ENCODE measurements at regions of chr6 and their contacts with region 1.

Region 1: GRCh38 chr6:163413345-163414116 is 987 bp upstream of the QKI start:
- DNase-seq: peak; percentile 84
- H3K4me3 ChIP-seq: peak overlapping the region; percentile 98 to 99
- H3K27ac ChIP-seq: peak overlapping the region; percentile 99
- H3K4me1 ChIP-seq: no peaks in the 10 kb centered on the region
- H3K27me3 ChIP-seq: no peaks in the 10 kb centered on the region
- CTCF ChIP-seq: peak in 2 of 4 experiments; percentile 11 to 15
- POLR2A ChIP-seq: peak; percentile 72

Region 2: GRCh38 chr6:163338671-163339405 is 74.7 kb before region 1 on chr6:
- intact Hi-C with region 1: loop called (anchors 5 kb)
- DNase-seq: no peak
- H3K4me3 ChIP-seq: no peak overlapping the region
- H3K27ac ChIP-seq: no peak overlapping the region
- H3K4me1 ChIP-seq: no peaks in the 10 kb centered on the region
- H3K27me3 ChIP-seq: no peaks in the 10 kb centered on the region
- CTCF ChIP-seq: no peak
- POLR2A ChIP-seq: no peak

Region 3: DNA sequence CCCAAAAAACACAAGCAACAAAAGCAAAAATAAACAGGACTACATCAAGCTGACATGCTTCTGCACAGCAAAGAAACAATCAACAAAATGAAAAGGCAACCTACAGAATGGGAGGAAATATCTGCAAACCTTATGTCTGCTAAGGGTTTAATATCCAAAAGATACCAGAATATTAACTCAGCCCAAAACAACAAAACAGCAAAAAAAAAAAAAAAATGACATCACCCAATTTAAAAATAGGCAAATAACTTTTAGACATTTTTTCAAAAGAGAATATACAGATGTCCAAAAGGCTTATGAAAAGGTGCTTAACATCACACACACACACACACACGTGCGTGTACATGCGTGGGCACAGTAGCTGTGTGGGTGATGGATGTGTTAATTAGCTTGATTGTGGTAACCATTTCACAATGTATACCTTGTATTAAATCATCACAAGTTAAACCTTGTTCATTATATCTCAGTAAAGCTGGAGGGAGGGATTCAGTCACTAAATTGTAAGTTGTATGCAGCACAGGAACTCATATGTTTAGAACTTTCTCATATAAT is 53.4 kb after region 1 on chr6:
- intact Hi-C with region 1: no loop called
- DNase-seq: no peak
- H3K4me3 ChIP-seq: no peak overlapping the region
- H3K27ac ChIP-seq: no peak overlapping the region
- H3K4me1 ChIP-seq: no peaks in the 10 kb centered on the region
- H3K27me3 ChIP-seq: no peaks in the 10 kb centered on the region
- CTCF ChIP-seq: no peak
- POLR2A ChIP-seq: no peak

Region 4: DNA sequence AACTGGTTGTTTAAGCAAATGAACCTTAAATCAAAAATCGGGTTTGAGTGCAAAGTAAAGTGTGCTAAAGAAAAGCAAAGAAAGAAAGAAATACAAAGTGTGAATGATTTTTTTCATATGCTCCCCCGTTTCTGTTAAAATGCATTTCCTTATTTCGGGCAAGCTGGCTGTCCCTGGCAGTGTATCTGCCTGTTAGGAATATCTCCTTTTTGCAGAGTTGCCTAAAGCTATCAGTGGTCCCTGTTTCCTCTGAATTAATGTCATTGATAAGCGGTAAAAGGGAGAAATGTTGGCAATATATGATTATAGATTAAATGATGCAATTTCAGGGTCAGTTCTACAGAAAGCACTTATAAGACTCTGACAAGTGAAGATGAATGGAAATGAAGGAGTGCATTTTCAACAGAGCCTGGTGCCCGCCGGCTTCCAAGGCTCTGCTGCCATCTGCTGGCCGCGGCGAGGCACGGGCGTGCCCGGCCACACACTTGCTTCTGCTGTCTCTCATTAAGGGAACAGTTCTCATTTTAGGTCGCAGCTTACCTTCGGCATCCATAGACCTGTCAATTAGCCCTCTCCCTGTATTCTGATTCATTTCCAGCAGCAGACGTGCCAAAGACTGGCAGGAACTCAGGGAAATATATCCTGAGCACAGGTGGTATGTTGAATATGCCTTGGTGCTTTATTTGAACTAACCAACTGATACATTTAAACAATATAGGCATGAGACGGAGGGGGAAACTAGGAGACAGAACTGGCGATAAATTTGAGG is 1513.9 kb after region 1 on chr6:
- intact Hi-C with region 1: loop called (anchors 5 kb)
- DNase-seq: peak; percentile 46
- H3K4me3 ChIP-seq: no peak overlapping the region
- H3K27ac ChIP-seq: no peak overlapping the region
- H3K4me1 ChIP-seq: no peaks in the 10 kb centered on the region
- H3K27me3 ChIP-seq: no peaks in the 10 kb centered on the region
- CTCF ChIP-seq: peak; percentile 81 to 92 (median 90)
- POLR2A ChIP-seq: no peak